Panc1 (cell line): ENCODE measurements at regions of chr5 and their contacts with region 1.

Region 1: DNA sequence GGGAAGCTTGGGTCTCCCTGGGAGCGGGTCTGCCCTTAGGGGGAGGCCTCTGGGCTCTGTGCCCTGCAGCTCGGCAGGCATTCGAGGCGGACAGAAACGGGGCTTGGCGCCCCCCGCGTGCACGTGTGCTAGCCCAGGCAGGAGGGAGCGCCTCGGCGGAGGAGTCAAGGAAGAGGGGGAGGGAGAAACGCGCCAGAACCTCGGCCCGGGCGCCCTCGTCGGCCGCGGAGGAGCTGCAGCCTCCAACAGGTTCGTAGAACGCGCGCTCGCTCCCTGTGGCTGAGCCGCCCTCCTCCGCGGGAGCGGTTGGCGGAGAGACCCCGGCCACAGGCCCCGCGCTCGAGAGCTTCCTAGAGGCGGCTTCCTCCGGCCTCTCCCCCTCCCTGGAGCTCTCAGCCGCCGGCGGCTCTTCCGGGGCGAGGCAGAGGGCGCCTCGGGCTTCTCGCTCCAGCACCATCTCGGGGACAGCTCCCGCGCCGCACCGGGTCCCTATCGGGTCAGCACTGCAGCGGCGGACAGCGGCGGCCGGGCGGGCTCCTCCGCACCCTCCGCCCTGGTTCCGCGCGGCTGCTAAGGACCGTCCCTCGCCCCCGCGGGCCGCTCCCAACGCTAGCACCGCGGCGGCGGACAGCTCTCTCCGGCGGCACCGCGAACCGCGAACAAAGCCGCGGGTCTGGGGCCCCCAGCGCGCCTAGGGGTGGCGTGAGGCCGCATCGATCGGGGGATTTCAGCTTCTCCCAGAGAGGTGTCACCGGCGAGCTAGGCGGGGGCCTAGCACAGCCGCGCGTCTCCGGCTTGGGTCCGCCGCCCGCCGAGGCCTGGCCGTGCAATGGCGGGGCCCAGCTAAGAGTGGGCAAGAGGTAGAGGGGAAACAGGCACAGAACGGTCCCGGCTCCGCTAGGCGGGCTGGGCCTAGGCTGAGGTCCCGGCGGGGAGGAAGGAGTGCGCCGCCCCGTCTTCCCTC is 74.6 kb upstream of the CPLX2 start:
- DNase-seq: no peak
- ATAC-seq: peak; percentile 92
- H3K4me3 ChIP-seq: peak overlapping the region in 1 of 2 experiments; percentile 17; a peak in 2 of 4 replicates
- H3K27ac ChIP-seq: no peak overlapping the region
- H3K4me1 ChIP-seq: peaks cover 6% of the 10 kb centered on the region; the same call in 1 of the 2 replicates
- H3K27me3 ChIP-seq: peaks cover 21% of the 10 kb centered on the region
- CTCF ChIP-seq: no peak

Region 2: GRCh38 chr5:175627005-175627404 is 169.8 kb before region 1 on chr5:
- CTCF ChIA-PET with region 1: no interaction called
- POLR2A ChIA-PET with region 1: no interaction called
- in situ Hi-C with region 1: no loop called
- intact Hi-C with region 1: no loop called
- DNase-seq: no peak
- ATAC-seq: no peak
- H3K4me3 ChIP-seq: no peak overlapping the region
- H3K27ac ChIP-seq: no peak overlapping the region
- H3K4me1 ChIP-seq: no peaks in the 10 kb centered on the region
- H3K27me3 ChIP-seq: no peaks in the 10 kb centered on the region; the same call in none of the 2 replicates
- CTCF ChIP-seq: no peak

Region 3: DNA sequence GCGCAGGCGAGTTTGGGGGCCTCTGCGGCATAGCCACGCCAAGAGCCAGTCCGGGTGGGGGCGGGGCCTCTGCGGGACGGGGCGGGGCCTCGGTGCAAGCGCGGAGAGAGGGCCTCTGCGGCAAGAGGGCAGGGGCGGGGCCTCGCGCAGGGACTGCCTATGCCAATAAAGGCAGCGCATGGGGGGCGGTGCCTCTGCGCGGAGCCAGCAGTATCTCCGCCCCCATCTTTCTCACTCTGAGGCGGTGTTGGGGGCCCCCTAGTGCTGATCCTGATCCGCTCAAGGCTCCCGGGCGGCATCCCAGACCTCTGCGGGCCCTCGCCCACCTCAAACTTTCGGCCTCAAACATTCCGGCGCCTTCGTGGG is 822.4 kb after region 1 on chr5:
- CTCF ChIA-PET with region 1: interaction called, 14 read pairs
- POLR2A ChIA-PET with region 1: no interaction called
- in situ Hi-C with region 1: no loop called
- intact Hi-C with region 1: no loop called
- DNase-seq: no peak
- ATAC-seq: peak; percentile 76
- H3K4me3 ChIP-seq: no peak overlapping the region
- H3K27ac ChIP-seq: no peak overlapping the region
- H3K4me1 ChIP-seq: peaks cover 5% of the 10 kb centered on the region; the same call in 1 of the 2 replicates
- H3K27me3 ChIP-seq: no peaks in the 10 kb centered on the region
- CTCF ChIP-seq: no peak; the same call in 1 of the 2 replicates